ENCODE measurements at regions of chr11 and their contacts with region 1.

Region 1: GRCh38 chr11:62791501-62792201 is at the start of gene TMEM223:
- DNase-seq: peak; percentile 95
- ATAC-seq: peak; percentile 90
- H3K4me3 ChIP-seq: peak within 1 kb of the TSS; percentile 97
- H3K27ac ChIP-seq: peak within 1 kb of the TSS; percentile 92
- H3K4me1 ChIP-seq: peaks cover 35% of the 10 kb centered on the region
- H3K27me3 ChIP-seq: no peaks in the 10 kb centered on the region
- CTCF ChIP-seq: peak; percentile 17
- total RNA-seq, gene TMEM223: 14.8 TPM

Region 2: DNA sequence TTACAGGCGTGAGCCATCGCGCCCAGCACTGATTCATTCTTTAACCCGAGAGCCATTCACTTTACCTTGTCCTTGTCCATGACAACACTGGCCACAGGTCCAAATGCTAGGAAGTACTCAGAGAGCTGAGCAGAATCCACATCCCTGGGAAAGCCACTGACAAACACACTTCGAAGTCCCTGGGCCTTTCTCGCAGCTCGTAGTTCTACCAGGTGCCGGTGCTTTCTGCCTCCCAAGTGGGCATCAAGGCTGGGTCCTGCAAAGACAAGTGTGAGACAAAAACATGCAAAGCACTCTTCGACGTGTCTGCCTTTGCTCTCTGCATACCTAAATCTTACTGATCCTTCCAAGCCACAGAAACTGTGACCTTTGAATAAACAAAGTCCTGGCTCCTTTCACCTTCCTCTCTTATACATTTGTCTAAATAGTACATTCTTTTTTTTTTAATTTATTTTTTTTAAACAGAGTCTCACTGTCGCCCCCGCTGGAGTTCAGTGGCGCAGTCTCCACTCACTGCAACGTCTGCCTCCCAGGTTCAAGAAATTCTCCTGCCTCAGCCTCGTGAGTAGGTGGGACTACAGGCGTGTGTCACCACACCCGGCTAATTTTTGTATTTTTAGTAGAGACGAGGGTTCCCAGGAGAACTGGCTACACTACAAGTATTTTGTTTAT is 202.5 kb before region 1 on chr11:
- intact Hi-C with region 1: no loop called
- DNase-seq: no peak
- ATAC-seq: no peak
- H3K4me3 ChIP-seq: no peak overlapping the region
- H3K27ac ChIP-seq: no peak overlapping the region
- H3K4me1 ChIP-seq: peaks cover 29% of the 10 kb centered on the region
- H3K27me3 ChIP-seq: no peaks in the 10 kb centered on the region
- CTCF ChIP-seq: peak; percentile 17

Region 3: GRCh38 chr11:62855571-62856332 is 64.1 kb after region 1 on chr11:
- intact Hi-C with region 1: loop called (anchors 10 kb)
- DNase-seq: peak; percentile 97
- ATAC-seq: peak; percentile 99
- H3K4me3 ChIP-seq: peak overlapping the region; percentile 87
- H3K27ac ChIP-seq: peak overlapping the region; percentile 87
- H3K4me1 ChIP-seq: peaks cover 27% of the 10 kb centered on the region
- H3K27me3 ChIP-seq: no peaks in the 10 kb centered on the region
- CTCF ChIP-seq: no peak

Measured in upper lobe of right lung (tissue), 1 donor.